PC-9 (cell line): ENCODE measurements at regions of chr18 and their contacts with region 1.

Region 1: GRCh38 chr18:73023978-73024377 is 156.2 kb upstream of the NETO1 start:
- DNase-seq: no peak
- H3K4me3 ChIP-seq: no peak overlapping the region
- H3K27ac ChIP-seq: no peak overlapping the region
- H3K4me1 ChIP-seq: no peaks in the 10 kb centered on the region
- H3K27me3 ChIP-seq: no peaks in the 10 kb centered on the region
- CTCF ChIP-seq: no peak

Region 2: GRCh38 chr18:72056171-72056570 is 967.8 kb before region 1 on chr18:
- CTCF ChIA-PET with region 1: no interaction called
- POLR2A ChIA-PET with region 1: no interaction called
- intact Hi-C with region 1: no loop called
- DNase-seq: no peak
- H3K4me3 ChIP-seq: no peak overlapping the region
- H3K27ac ChIP-seq: no peak overlapping the region
- H3K4me1 ChIP-seq: no peaks in the 10 kb centered on the region
- H3K27me3 ChIP-seq: no peaks in the 10 kb centered on the region
- CTCF ChIP-seq: no peak

Region 3: GRCh38 chr18:72840109-72840508 is 183.9 kb before region 1 on chr18:
- CTCF ChIA-PET with region 1: no interaction called
- POLR2A ChIA-PET with region 1: no interaction called
- intact Hi-C with region 1: no loop called
- DNase-seq: no peak
- H3K4me3 ChIP-seq: no peak overlapping the region
- H3K27ac ChIP-seq: no peak overlapping the region
- H3K4me1 ChIP-seq: no peaks in the 10 kb centered on the region
- H3K27me3 ChIP-seq: no peaks in the 10 kb centered on the region
- CTCF ChIP-seq: no peak

Region 4: GRCh38 chr18:72995558-72995957 is 28.4 kb before region 1 on chr18:
- CTCF ChIA-PET with region 1: interaction called, 10 read pairs
- POLR2A ChIA-PET with region 1: no interaction called
- intact Hi-C with region 1: no loop called
- DNase-seq: no peak
- H3K4me3 ChIP-seq: no peak overlapping the region
- H3K27ac ChIP-seq: no peak overlapping the region
- H3K4me1 ChIP-seq: peaks cover 39% of the 10 kb centered on the region
- H3K27me3 ChIP-seq: no peaks in the 10 kb centered on the region
- CTCF ChIP-seq: no peak

Region 5: DNA sequence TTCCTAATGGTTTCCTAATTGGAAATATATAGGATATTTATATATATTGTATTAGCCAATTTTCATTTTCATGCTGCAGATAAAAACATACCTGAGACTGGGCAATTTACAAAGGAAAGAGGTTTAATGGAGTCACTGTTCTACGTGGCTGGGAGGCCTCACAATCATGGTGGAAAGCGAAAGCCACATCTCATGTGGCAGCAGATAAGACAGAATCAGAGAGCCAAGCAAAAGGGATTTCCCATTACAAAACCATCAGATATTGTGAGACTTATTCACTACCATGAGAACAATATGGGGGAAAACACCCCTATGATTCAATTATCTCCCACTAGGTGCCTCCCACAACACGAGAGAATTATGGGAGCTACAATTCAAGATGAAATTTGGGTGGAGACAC is 86.3 kb after region 1 on chr18:
- CTCF ChIA-PET with region 1: no interaction called
- POLR2A ChIA-PET with region 1: no interaction called
- intact Hi-C with region 1: no loop called
- DNase-seq: no peak
- H3K4me3 ChIP-seq: no peak overlapping the region
- H3K27ac ChIP-seq: no peak overlapping the region
- H3K4me1 ChIP-seq: no peaks in the 10 kb centered on the region
- H3K27me3 ChIP-seq: no peaks in the 10 kb centered on the region
- CTCF ChIP-seq: no peak